ENCODE measurements at regions of chr2 and their contacts with region 1.

Region 1: DNA sequence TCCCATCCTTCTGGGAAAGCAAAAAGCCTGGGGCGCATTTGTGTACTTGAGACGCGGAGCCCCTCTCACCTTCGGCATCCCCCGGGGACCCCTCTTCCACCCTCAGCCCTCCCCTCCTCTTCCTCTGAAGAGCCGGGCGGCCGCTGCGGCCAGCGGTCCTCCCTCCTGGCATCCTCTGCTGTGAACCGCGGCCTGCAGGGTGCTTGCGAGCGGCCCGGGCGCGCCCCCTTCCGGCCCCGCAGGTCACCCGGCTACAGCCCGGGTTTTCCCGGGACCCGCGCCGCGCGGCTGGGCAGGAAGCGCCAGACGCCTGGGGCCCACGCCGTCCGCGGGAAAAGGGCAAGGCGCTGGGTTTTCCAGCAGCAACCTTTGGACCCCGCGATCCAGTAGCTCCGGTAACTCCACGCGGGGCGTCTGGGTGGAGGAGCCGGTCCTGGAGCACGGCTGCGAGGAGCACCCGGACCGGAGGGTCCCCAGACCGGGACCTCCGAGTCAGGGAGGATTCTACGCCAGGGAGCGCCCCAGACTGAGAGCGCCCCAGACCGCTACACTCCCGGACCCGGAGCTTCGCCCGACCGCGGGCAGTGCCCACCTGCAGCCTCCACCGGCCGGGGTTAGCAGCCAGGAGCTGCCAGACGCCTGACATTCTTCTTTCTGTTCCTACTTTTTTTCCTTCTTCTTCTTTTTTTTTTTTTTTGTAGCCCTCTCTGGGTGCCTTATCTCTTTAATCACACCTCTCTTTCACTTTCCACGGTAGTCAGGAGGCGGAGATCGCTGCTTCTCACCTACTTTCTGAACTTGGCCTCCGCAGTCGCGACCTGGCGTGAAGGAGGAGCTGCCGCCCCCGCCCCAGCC is at the start of gene IL18R1:
- DNase-seq: peak; percentile 32
- ATAC-seq: peak; percentile 100
- H3K4me3 ChIP-seq: peak within 1 kb of the TSS; percentile 57 to 62
- H3K27ac ChIP-seq: no peak within 1 kb of the TSS
- H3K4me1 ChIP-seq: peaks cover 0 to 7% of the 10 kb centered on the region in 2 experiments; a peak in 2 of 4 replicates
- H3K27me3 ChIP-seq: no peaks in the 10 kb centered on the region
- CTCF ChIP-seq: peak; percentile 70 to 81 (median 78)
- POLR2A ChIP-seq: no peak
- RAD21 ChIP-seq: peak; percentile 79
- total RNA-seq, gene IL18R1: 1.5 TPM

Region 2: DNA sequence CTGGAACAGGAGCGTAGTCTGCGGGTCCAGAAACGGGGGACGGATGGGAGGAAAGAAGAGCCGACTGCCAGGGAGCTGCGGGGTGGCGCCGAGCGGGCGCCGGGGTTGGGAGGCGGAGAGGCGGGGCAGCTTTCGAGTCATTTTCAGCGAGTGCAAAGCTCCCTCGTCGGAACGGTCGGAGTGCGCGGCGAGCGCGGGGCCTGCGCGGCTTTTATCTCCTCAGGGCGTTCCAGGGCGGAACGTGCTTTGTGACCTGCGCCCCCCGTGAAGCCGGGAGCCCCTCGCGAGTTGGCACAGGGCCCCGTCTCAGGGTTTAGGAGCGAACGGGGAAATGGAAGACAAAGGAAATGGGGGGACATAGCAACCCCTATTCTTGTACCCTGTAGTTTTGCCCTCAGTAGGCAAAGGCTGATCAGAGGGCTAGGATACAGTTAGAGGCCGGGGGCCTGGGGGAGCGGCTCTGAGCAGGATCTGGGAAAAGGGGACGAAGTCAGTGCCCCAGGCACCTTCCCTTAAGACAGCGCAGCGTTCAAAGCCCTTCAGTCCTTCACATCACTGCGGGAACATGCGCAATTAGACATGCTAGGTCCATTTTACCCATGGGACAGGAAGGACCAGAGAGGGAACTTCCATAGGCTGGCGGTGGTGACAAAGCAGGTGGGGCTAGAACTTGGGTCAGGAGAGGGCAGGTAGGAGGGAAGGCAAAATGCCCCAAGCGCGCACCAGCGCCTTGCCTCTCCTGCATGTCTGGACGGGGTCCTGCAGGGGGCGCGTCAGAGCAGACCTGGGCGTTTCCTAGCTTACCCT is 104.5 kb before region 1 on chr2:
- CTCF ChIA-PET with region 1: no interaction called
- POLR2A ChIA-PET with region 1: no interaction called
- RAD21 ChIA-PET with region 1: no interaction called
- intact Hi-C with region 1: loop called (anchors 5 kb)
- DNase-seq: no peak
- ATAC-seq: peak; percentile 42; the same call in 1 of the 2 replicates
- H3K4me3 ChIP-seq: no peak overlapping the region
- H3K27ac ChIP-seq: no peak overlapping the region
- H3K4me1 ChIP-seq: peaks cover 0 to 4% of the 10 kb centered on the region in 2 experiments; a peak in 1 of 4 replicates
- H3K27me3 ChIP-seq: no peaks in the 10 kb centered on the region
- CTCF ChIP-seq: peak in 2 of 3 experiments; percentile 22 to 35; a peak in 2 of 6 replicates
- POLR2A ChIP-seq: no peak
- RAD21 ChIP-seq: no peak

Measured in HCT116 (cell line).